ENCODE measurements at regions of chr2 and their contacts with region 1.

Region 1: DNA sequence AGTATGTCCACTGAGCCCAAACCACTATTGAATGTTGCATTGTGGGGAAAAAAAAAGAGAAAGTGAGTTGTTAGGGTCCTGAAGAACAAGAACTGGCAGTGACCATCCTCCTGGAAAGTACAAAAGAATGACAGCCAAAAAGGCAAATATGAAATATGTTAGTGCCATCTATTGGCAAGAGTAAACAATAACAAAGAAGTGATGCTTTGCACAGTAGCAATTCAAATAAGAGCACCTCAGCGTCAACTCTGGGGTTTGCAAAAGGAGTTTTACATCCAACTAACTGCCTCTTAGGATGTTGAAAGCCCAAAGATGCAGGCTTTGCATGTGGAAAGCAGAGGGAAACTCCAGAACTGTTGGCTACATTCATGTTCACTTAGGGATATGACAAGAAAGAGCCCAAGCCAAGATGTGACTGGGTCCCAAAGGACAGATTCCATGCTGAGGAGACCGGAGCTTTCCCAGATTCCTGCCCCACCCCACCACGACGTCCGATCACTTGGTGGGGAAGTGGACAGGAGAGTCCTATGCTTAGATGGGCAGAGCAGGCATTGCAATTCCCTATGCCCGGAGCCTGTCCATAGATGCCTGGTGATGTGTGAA is 15.6 kb downstream of the TRABD2A start:
- DNase-seq: no peak
- H3K4me3 ChIP-seq: no peak overlapping the region
- H3K27ac ChIP-seq: no peak overlapping the region
- H3K27me3 ChIP-seq: no peaks in the 10 kb centered on the region
- CTCF ChIP-seq: 0 out of 2 replicates have a peak, but pooled peaks have one; percentile 15

Region 2: GRCh38 chr2:84849271-84849952 is 15.9 kb before region 1 on chr2:
- CTCF ChIA-PET with region 1: interaction called, 10 read pairs
- POLR2A ChIA-PET with region 1: no interaction called
- DNase-seq: no peak
- H3K4me3 ChIP-seq: no peak overlapping the region
- H3K27ac ChIP-seq: no peak overlapping the region
- H3K27me3 ChIP-seq: no peaks in the 10 kb centered on the region
- CTCF ChIP-seq: no peak